ENCODE measurements at regions of chr17 and their contacts with region 1.

Region 1: GRCh38 chr17:9162275-9162985 is 141.1 kb downstream of the NTN1 start:
- DNase-seq: peak; percentile 68
- ATAC-seq: peak; percentile 90
- H3K4me3 Mint-ChIP-seq: peak overlapping the region; percentile 51
- H3K27ac Mint-ChIP-seq: no peak overlapping the region
- H3K4me1 Mint-ChIP-seq: peaks cover 36% of the 10 kb centered on the region
- H3K27me3 Mint-ChIP-seq: no peaks in the 10 kb centered on the region
- CTCF ChIP-seq: peak; percentile 54

Region 2: DNA sequence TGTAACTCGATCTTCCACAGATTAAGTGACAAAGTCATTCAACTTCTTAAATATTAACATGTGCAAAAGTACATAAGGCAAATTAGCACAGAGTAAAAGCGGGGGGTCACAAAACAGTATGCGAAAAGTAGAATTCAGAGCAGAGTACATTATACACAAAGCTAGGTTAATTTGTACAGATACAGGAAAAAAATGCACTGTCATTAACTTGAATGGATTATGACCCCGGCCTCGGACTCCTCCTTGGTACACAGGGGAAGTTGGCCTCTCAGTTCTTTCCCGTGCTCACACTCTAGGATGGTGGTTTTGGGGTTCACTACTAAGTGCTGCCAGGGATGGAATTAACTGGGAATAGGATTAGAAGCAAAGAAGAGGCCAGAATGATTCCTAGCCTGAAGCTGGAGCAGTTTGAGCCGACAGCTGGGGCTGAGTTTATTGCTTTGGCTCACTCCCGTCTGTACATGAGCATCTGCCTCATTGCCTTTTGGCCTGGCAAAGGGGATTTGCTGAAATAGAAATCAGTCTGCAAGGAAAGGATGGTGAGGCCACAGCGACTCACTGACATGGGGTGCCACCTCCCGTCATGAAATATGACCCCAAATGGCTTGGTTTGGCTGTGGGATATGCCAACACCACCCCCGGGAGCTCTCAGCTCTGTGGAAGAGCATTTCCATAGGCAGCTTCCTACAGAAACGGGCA is 117.5 kb before region 1 on chr17:
- CTCF ChIA-PET with region 1: no interaction called
- POLR2A ChIA-PET with region 1: no interaction called
- DNase-seq: no peak
- ATAC-seq: no peak; the same call in 1 of the 2 replicates
- H3K4me3 Mint-ChIP-seq: no peak overlapping the region
- H3K27ac Mint-ChIP-seq: no peak overlapping the region
- H3K4me1 Mint-ChIP-seq: peaks cover 14% of the 10 kb centered on the region
- H3K27me3 Mint-ChIP-seq: no peaks in the 10 kb centered on the region; the same call in 1 of the 2 replicates
- CTCF ChIP-seq: no peak

Region 3: GRCh38 chr17:9115446-9116191 is 46.8 kb before region 1 on chr17:
- CTCF ChIA-PET with region 1: interaction called, 12 read pairs
- POLR2A ChIA-PET with region 1: no interaction called
- DNase-seq: peak; percentile 79
- ATAC-seq: peak; percentile 83
- H3K4me3 Mint-ChIP-seq: peak overlapping the region; percentile 45
- H3K27ac Mint-ChIP-seq: no peak overlapping the region
- H3K4me1 Mint-ChIP-seq: peaks cover 33% of the 10 kb centered on the region
- H3K27me3 Mint-ChIP-seq: peaks cover 19% of the 10 kb centered on the region
- CTCF ChIP-seq: no peak

Region 4: GRCh38 chr17:9144502-9145249 is 17.8 kb before region 1 on chr17:
- CTCF ChIA-PET with region 1: interaction called, 17 read pairs
- POLR2A ChIA-PET with region 1: no interaction called
- DNase-seq: no peak
- ATAC-seq: no peak
- H3K4me3 Mint-ChIP-seq: no peak overlapping the region
- H3K27ac Mint-ChIP-seq: no peak overlapping the region
- H3K4me1 Mint-ChIP-seq: peaks cover 8% of the 10 kb centered on the region; the same call in 1 of the 2 replicates
- H3K27me3 Mint-ChIP-seq: no peaks in the 10 kb centered on the region
- CTCF ChIP-seq: no peak

Region 5: GRCh38 chr17:9150446-9151090 is 11.9 kb before region 1 on chr17:
- CTCF ChIA-PET with region 1: interaction called, 17 read pairs
- POLR2A ChIA-PET with region 1: no interaction called
- DNase-seq: no peak
- ATAC-seq: 0 out of 2 replicates have a peak, but pooled peaks have one; percentile 32
- H3K4me3 Mint-ChIP-seq: no peak overlapping the region
- H3K27ac Mint-ChIP-seq: 0 out of 2 replicates have a peak overlapping the region, but pooled peaks have one; percentile 46
- H3K4me1 Mint-ChIP-seq: peaks cover 14% of the 10 kb centered on the region
- H3K27me3 Mint-ChIP-seq: no peaks in the 10 kb centered on the region
- CTCF ChIP-seq: no peak

Region 6: GRCh38 chr17:9181640-9182039 is 19.2 kb after region 1 on chr17:
- CTCF ChIA-PET with region 1: interaction called, 16 read pairs
- POLR2A ChIA-PET with region 1: interaction called, 3 read pairs
- DNase-seq: no peak
- ATAC-seq: no peak
- H3K4me3 Mint-ChIP-seq: no peak overlapping the region
- H3K27ac Mint-ChIP-seq: no peak overlapping the region
- H3K4me1 Mint-ChIP-seq: peaks cover 17% of the 10 kb centered on the region
- H3K27me3 Mint-ChIP-seq: peaks cover 2% of the 10 kb centered on the region; the same call in 1 of the 2 replicates
- CTCF ChIP-seq: no peak